Transverse colon (tissue), 4 donors: ENCODE measurements at regions of chr19 and their contacts with region 1.

Region 1: DNA sequence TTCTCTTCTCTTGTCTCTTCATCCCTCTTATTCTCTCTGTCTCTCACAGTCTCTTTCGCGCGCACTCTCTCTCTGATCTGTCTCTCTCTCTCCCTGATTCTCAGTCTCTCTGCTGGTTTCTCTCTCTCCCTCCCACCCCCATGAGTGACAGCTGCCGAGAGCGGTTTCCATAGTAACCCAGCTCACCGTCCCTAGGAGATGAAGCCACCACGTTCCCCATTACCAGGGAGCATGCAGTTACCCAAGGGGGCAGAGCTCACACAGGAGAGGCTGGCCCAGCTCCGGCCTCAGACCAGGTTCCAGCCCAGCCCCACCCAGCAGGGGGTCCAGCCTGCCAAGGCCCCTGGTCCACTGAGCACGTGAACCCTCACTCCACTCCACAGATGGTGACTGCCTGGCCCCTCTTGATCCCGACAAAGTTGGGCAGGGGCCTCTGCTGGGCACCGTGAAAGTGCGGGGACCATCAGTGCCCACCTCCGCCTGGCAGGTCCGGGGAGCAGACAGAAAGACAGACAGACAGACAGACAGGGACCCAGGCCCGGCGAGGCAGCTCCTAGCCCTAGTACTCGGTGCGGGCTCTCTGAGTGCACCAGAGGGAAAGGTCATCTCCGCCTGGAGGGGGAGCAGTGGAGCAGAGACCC is 50.6 kb downstream of the CELF5 start:
- DNase-seq: no peak
- H3K4me3 ChIP-seq: peak overlapping the region in 3 of 4 donors; percentile 15 to 54 (median 47)
- H3K27ac ChIP-seq: peak overlapping the region in 3 of 4 donors; percentile 36 to 68 (median 66)
- H3K4me1 ChIP-seq: peaks cover 0 to 12% (median 11%) of the 10 kb centered on the region in 4 donors
- H3K27me3 ChIP-seq: peaks cover 64% of the 10 kb centered on the region
- CTCF ChIP-seq: peak in 1 of 5 experiments; percentile 18
- EP300 ChIP-seq: no peak
- POLR2A ChIP-seq: no peak

Region 2: GRCh38 chr19:3324321-3324856 is 49.3 kb after region 1 on chr19:
- in situ Hi-C with region 1: no loop called
- intact Hi-C with region 1: no loop called
- DNase-seq: peak; percentile 78
- H3K4me3 ChIP-seq: no peak overlapping the region
- H3K27ac ChIP-seq: no peak overlapping the region
- H3K4me1 ChIP-seq: peaks cover 0 to 3% (median 0%) of the 10 kb centered on the region in 4 donors
- H3K27me3 ChIP-seq: peaks cover 17% of the 10 kb centered on the region
- CTCF ChIP-seq: peak; percentile 63 to 82 (median 73)
- EP300 ChIP-seq: no peak
- POLR2A ChIP-seq: no peak

Region 3: DNA sequence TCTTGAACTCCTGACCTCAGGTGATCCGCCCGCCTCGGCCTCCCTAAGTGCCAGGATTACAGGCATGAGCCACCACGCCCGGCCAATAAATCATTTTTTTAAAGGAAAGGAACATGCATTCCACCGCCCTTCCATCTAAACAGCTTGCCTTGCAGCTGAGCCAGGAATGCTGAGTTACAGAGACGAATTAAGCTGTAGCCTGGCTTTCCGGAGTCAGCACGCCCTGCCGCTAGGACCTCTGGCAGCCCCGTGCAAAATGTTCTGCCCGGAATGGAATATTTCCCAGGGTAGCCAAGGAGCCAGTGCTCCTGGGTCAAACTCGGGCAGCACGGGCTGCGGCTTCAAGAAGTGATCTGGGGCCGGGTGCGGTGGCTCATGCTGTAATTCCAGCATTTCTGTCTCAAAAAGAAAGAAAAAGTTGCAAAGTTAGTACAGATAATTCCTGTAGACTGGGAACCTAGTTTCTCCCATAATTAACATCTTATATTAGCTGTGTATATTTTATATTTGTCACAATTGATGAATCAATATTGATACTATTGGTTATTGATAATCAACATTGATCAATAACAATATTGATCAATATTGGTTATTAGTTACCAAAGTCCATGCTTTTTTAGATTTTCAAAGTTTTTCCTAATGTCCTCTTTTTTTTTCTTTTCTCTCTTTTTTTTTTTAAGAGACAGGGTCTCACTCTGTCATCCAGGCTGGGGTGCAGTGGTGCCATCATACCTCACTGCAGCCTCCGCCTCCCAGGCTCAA is 624.6 kb after region 1 on chr19:
- in situ Hi-C with region 1: loop called in 1 of 4 experiments (anchors 25 kb)
- intact Hi-C with region 1: no loop called
- DNase-seq: peak; percentile 15
- H3K4me3 ChIP-seq: no peak overlapping the region
- H3K27ac ChIP-seq: peak overlapping the region in 2 of 4 donors; percentile 25 to 43
- H3K4me1 ChIP-seq: peaks cover 0 to 7% (median 0%) of the 10 kb centered on the region in 4 donors
- H3K27me3 ChIP-seq: no peaks in the 10 kb centered on the region
- CTCF ChIP-seq: no peak
- EP300 ChIP-seq: no peak
- POLR2A ChIP-seq: no peak